ENCODE measurements at regions of chr3 and their contacts with region 1.

Region 1: DNA sequence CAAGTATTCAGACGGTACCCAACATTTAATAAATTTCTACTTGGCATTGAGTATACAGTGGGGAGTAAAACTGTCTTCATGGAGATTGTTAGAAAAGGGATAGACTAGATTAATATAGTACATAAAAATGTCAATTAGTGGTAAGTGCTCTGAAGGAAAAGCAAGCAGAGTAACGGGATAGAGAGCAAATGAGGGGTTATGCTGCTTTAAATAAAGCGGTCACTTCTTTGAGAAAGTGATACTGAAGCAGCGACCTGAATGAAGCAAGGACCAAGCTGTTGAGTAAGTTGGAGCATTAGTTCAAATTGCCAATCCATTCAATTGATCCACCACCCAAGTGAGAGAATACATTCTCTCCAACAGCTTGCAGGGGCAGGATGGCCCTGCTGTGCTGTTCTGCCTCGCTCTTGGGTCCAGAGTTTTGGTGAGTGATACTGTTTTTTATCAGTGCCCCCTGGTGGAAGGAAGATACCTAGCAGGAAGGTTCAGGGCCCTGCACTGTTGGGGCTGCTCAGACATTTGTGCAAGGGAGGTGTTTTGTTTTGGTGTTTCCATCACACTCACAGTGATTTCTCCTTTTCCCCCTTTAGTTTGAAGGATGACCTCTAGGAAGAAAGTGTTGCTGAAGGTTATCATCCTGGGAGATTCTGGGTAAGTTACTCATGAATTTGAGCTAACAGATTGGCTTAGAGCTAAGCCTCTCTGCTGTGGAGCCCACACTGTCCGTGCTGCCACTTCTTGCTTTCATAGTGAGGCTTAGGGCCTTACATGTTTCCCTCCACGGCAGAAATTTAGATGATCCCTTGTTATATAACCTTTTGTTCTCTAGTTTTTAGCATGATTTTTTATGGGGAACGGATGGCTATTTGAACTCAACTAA is 69.0 kb downstream of the RAB7A start:
- DNase-seq: peak; percentile 81
- ATAC-seq: peak; percentile 91
- H3K4me3 Mint-ChIP-seq: no peak overlapping the region
- H3K27ac Mint-ChIP-seq: peak overlapping the region; percentile 78
- H3K4me1 Mint-ChIP-seq: peaks cover 76% of the 10 kb centered on the region
- H3K27me3 Mint-ChIP-seq: no peaks in the 10 kb centered on the region

Region 2: DNA sequence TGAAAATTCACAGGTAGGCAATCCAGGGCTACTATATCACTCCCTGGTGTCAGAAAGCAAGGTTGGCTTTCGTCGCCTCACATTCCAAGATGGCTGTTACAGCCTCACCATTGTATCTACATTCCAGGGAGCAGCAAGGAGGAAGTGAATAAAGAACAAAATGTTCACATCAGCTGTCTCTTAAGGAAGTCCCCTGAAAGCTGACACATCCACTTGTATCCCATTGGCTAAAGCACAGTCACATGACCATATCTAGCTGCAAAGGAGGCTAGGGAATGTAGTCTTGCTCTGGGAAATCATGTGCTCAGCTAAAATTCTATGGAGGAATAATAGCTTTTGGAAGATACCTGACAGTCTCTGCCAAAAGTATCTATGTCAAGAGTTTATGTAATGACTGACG is 289.2 kb before region 1 on chr3:
- CTCF ChIA-PET with region 1: no interaction called
- POLR2A ChIA-PET with region 1: no interaction called
- DNase-seq: no peak
- ATAC-seq: no peak
- H3K4me3 Mint-ChIP-seq: no peak overlapping the region
- H3K27ac Mint-ChIP-seq: no peak overlapping the region
- H3K4me1 Mint-ChIP-seq: no peaks in the 10 kb centered on the region
- H3K27me3 Mint-ChIP-seq: peaks cover 2% of the 10 kb centered on the region

Region 3: GRCh38 chr3:128617557-128618397 is 177.2 kb before region 1 on chr3:
- CTCF ChIA-PET with region 1: interaction called, 24 read pairs
- POLR2A ChIA-PET with region 1: no interaction called
- DNase-seq: peak; percentile 99
- ATAC-seq: peak; percentile 94
- H3K4me3 Mint-ChIP-seq: peak overlapping the region; percentile 85
- H3K27ac Mint-ChIP-seq: peak overlapping the region; percentile 88
- H3K4me1 Mint-ChIP-seq: peaks cover 46% of the 10 kb centered on the region
- H3K27me3 Mint-ChIP-seq: no peaks in the 10 kb centered on the region

Region 4: GRCh38 chr3:128689060-128689459 is 106.0 kb before region 1 on chr3:
- CTCF ChIA-PET with region 1: interaction called, 14 read pairs
- POLR2A ChIA-PET with region 1: no interaction called
- DNase-seq: no peak
- ATAC-seq: no peak
- H3K4me3 Mint-ChIP-seq: no peak overlapping the region
- H3K27ac Mint-ChIP-seq: no peak overlapping the region
- H3K4me1 Mint-ChIP-seq: peaks cover 8% of the 10 kb centered on the region
- H3K27me3 Mint-ChIP-seq: peaks cover 7% of the 10 kb centered on the region

Region 5: GRCh38 chr3:128725932-128726690 is 68.9 kb before region 1 on chr3 and contains the start of gene RAB7A:
- CTCF ChIA-PET with region 1: interaction called, 21 read pairs
- POLR2A ChIA-PET with region 1: no interaction called
- DNase-seq: peak; percentile 98
- ATAC-seq: peak; percentile 95
- H3K4me3 Mint-ChIP-seq: peak within 1 kb of the TSS; percentile 86
- H3K27ac Mint-ChIP-seq: peak within 1 kb of the TSS; percentile 91
- H3K4me1 Mint-ChIP-seq: peaks cover 48% of the 10 kb centered on the region
- H3K27me3 Mint-ChIP-seq: peaks cover 6% of the 10 kb centered on the region
- total RNA-seq, gene RAB7A: 256 to 269 TPM

Region 6: GRCh38 chr3:128760042-128760441 is 35.0 kb before region 1 on chr3:
- CTCF ChIA-PET with region 1: interaction called, 10 read pairs
- POLR2A ChIA-PET with region 1: no interaction called
- DNase-seq: no peak
- ATAC-seq: no peak
- H3K4me3 Mint-ChIP-seq: no peak overlapping the region
- H3K27ac Mint-ChIP-seq: no peak overlapping the region
- H3K4me1 Mint-ChIP-seq: peaks cover 35% of the 10 kb centered on the region
- H3K27me3 Mint-ChIP-seq: no peaks in the 10 kb centered on the region

Region 7: GRCh38 chr3:128845778-128846485 is 50.9 kb after region 1 on chr3:
- CTCF ChIA-PET with region 1: interaction called, 13 read pairs
- POLR2A ChIA-PET with region 1: no interaction called
- DNase-seq: peak; percentile 82
- ATAC-seq: peak; percentile 84
- H3K4me3 Mint-ChIP-seq: peak overlapping the region; percentile 68
- H3K27ac Mint-ChIP-seq: peak overlapping the region; percentile 82
- H3K4me1 Mint-ChIP-seq: peaks cover 19% of the 10 kb centered on the region
- H3K27me3 Mint-ChIP-seq: no peaks in the 10 kb centered on the region

Region 8: GRCh38 chr3:128950223-128950938 is 155.4 kb after region 1 on chr3:
- CTCF ChIA-PET with region 1: no interaction called
- POLR2A ChIA-PET with region 1: no interaction called
- DNase-seq: peak; percentile 37
- ATAC-seq: no peak
- H3K4me3 Mint-ChIP-seq: no peak overlapping the region
- H3K27ac Mint-ChIP-seq: no peak overlapping the region
- H3K4me1 Mint-ChIP-seq: no peaks in the 10 kb centered on the region
- H3K27me3 Mint-ChIP-seq: peaks cover 3% of the 10 kb centered on the region

Measured in activated CD8-positive, alpha-beta T cell treated with anti-CD3 and anti-CD28 coated beads, Interleukin-2, amount 10 ng/mL, durations not matched to agents 7 days and 5 days (primary cell).